ENCODE measurements at regions of chr2 and their contacts with region 1.

Region 1: DNA sequence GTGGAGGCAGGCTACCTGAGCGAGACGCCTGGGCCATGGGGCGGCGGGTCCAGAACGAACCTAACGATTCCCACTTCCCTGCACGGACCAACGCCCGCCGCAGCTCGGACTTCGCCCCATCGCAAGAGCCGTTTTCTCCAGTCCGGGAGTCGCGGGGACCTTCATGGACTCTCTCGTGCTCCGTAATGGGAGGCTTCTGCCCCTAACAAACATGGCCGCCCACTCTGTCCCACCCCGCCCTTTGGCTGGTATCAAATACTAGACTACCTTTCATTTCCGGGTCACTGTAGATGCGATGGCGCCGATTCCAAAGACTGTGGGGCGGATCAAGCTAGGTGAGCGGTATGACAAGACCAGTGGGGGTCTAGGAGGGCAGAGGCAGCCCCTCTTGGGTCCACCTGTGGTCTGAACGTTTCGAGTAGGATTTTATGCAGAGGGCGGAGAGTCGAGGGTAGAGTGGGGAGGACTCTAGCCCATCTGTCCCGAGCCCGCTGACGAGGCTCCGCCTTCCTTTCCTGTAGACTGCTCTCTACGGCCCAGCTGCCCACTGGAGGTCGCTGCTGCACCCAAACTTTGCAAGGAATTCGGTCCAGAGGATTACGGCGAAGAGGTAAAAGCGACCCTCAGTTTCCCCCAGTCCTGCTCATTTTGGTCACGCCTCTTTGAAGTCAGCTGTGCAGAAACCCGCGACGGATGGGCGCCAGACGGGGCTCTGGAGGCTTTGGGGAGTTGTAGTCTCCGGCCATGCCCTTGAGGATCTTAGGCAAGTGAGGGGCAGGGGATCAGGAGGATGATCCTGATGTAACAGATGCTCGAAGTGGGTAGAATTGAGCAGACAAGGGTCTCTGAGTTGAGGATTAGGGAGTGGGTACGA is at the starts of genes CCDC142 and TTC31:
- DNase-seq: peak; percentile 83
- H3K4me3 ChIP-seq: peak within 1 kb of the TSS; percentile 99
- H3K27ac ChIP-seq: peak within 1 kb of the TSS; percentile 70
- H3K27me3 ChIP-seq: no peaks in the 10 kb centered on the region
- CTCF ChIP-seq: peak; percentile 90
- polyA plus RNA-seq, gene CCDC142: 4.5 and 4.6 TPM in 2 replicates
- polyA plus RNA-seq, gene TTC31: 16.4 and 17.7 TPM in 2 replicates

Region 2: DNA sequence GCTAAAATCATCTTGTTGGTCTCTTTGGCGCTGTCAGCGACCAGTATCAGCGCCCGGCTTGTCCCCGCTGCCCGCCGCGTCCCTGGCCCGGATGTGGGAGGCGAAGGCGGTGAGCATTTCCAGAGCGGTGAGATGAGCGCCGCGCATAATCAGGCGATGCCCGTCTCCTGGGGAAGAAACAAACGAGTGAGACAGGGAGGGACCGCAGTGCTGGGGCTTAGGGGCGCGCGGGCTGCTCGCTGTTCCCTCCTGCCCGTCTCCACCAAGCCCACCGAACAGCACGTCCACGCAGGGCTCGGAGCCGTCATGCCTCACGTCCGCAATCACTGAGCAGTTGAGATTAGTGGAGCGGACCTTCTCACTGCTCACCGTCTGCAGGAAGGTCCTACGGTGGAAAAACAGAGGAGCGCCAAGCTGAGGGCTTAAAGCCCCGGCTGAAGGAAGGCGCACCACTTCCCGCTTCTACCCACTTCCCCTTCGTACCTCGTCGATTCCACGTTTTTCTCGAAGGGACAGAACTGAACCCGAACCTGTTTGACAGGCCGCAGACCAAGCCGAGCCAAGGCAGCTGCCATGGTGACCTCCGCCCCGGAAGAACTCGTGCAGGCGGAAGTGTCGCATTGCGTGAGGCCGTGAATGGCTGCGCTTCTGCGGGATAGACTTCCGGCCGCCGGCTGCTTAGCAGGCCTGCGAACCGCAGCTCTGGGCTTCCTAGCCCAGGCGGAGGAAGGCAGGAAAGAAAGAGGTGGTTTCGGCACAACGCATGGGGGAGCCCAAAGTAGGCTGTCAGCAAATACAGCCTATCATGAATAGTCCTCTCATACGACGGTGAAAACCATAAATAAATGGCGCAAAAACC is 10.7 kb before region 1 on chr2 and contains the start of gene MRPL53:
- CTCF ChIA-PET with region 1: interaction called, 6 read pairs
- POLR2A ChIA-PET with region 1: interaction called, 13 read pairs
- DNase-seq: peak; percentile 83
- H3K4me3 ChIP-seq: peak within 1 kb of the TSS; percentile 89
- H3K27ac ChIP-seq: peak within 1 kb of the TSS; percentile 89
- H3K27me3 ChIP-seq: no peaks in the 10 kb centered on the region
- CTCF ChIP-seq: no peak
- polyA plus RNA-seq, gene MRPL53: 25.9 and 32.8 TPM in 2 replicates

Region 3: DNA sequence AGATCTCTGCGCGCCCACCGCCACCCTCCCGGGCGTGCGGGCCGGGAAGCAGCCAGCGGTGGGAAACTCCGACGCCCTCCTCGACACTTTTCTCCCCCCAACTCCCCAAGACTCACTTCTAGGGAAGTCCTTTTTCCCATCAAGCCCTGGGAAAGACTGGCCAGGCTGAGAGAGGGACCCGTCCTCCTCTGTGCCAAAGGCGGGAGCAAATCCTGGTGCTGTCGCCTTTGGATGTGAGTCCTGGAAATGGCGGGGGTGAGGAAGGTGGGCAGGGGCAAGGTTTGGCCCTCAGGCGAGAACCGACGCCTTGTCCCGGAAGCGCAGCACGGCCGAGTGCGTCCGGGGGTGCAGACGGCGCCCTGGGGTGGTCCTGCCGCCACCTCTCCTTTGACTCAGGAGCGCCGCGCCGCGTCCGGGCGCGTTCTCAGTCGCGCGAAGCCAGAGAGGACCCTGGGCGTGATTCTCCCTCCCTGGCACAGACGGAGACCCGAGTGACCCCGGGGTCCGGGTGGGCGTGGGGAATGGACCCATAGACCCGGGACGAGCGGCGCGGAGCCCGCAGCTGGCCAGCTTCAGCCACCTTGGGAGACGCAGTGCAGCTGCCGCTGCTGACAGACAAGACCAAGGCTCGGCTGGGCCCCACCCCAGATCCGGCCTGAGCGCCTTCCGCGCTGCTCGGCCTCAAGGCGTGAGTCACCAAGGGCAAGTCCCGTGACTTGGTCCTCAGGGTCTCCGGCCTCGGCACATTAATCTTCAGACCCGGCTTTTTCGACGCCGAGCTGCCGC is 19.9 kb after region 1 on chr2:
- CTCF ChIA-PET with region 1: interaction called, 11 read pairs
- POLR2A ChIA-PET with region 1: interaction called, 8 read pairs
- DNase-seq: peak; percentile 58
- H3K4me3 ChIP-seq: peak overlapping the region; percentile 62
- H3K27ac ChIP-seq: peak overlapping the region; percentile 90
- H3K27me3 ChIP-seq: peaks cover 34% of the 10 kb centered on the region
- CTCF ChIP-seq: peak; percentile 40

Region 4: GRCh38 chr2:74529357-74530238 is 46.6 kb after region 1 on chr2 and contains the starts of genes AUP1 and HTRA2:
- CTCF ChIA-PET with region 1: interaction called, 12 read pairs
- POLR2A ChIA-PET with region 1: interaction called, 16 read pairs
- DNase-seq: peak; percentile 98
- H3K4me3 ChIP-seq: peak within 1 kb of the TSS; percentile 100
- H3K27ac ChIP-seq: peak within 1 kb of the TSS; percentile 77
- H3K27me3 ChIP-seq: no peaks in the 10 kb centered on the region
- CTCF ChIP-seq: no peak
- polyA plus RNA-seq, gene AUP1: 51.9 and 64.4 TPM in 2 replicates
- polyA plus RNA-seq, gene HTRA2: 20.2 and 22.4 TPM in 2 replicates

Region 5: GRCh38 chr2:74560591-74561421 is 77.8 kb after region 1 on chr2:
- CTCF ChIA-PET with region 1: no interaction called
- POLR2A ChIA-PET with region 1: no interaction called
- DNase-seq: no peak
- H3K4me3 ChIP-seq: no peak overlapping the region
- H3K27ac ChIP-seq: no peak overlapping the region
- H3K27me3 ChIP-seq: no peaks in the 10 kb centered on the region
- CTCF ChIP-seq: no peak

Region 6: GRCh38 chr2:74587664-74588277 is 104.7 kb after region 1 on chr2:
- CTCF ChIA-PET with region 1: interaction called, 174 read pairs
- POLR2A ChIA-PET with region 1: interaction called, 15 read pairs
- DNase-seq: no peak
- H3K4me3 ChIP-seq: no peak overlapping the region
- H3K27ac ChIP-seq: no peak overlapping the region
- H3K27me3 ChIP-seq: peaks cover 14% of the 10 kb centered on the region
- CTCF ChIP-seq: peak; percentile 76

Measured in AG04450 (cell line).